Activated CD4-positive, alpha-beta T cell treated with anti-CD3 and anti-CD28 coated beads, Interleukin-2, amount 10 ng/mL, durations not matched to agents 24 days and 14 days (primary cell): ENCODE measurements at regions of chr3 and their contacts with region 1.

Region 1: GRCh38 chr3:124786441-124787241 is 56.4 kb downstream of the UMPS start:
- DNase-seq: no peak
- H3K4me3 Mint-ChIP-seq: no peak overlapping the region
- H3K27ac Mint-ChIP-seq: peak overlapping the region; percentile 34
- H3K4me1 Mint-ChIP-seq: peaks cover 13% of the 10 kb centered on the region
- H3K27me3 Mint-ChIP-seq: peaks cover 1% of the 10 kb centered on the region

Region 2: GRCh38 chr3:124876401-124876878 is 89.8 kb after region 1 on chr3:
- intact Hi-C with region 1: no loop called
- DNase-seq: no peak
- H3K4me3 Mint-ChIP-seq: no peak overlapping the region
- H3K27ac Mint-ChIP-seq: no peak overlapping the region
- H3K4me1 Mint-ChIP-seq: peaks cover 11% of the 10 kb centered on the region
- H3K27me3 Mint-ChIP-seq: peaks cover 25% of the 10 kb centered on the region

Region 3: DNA sequence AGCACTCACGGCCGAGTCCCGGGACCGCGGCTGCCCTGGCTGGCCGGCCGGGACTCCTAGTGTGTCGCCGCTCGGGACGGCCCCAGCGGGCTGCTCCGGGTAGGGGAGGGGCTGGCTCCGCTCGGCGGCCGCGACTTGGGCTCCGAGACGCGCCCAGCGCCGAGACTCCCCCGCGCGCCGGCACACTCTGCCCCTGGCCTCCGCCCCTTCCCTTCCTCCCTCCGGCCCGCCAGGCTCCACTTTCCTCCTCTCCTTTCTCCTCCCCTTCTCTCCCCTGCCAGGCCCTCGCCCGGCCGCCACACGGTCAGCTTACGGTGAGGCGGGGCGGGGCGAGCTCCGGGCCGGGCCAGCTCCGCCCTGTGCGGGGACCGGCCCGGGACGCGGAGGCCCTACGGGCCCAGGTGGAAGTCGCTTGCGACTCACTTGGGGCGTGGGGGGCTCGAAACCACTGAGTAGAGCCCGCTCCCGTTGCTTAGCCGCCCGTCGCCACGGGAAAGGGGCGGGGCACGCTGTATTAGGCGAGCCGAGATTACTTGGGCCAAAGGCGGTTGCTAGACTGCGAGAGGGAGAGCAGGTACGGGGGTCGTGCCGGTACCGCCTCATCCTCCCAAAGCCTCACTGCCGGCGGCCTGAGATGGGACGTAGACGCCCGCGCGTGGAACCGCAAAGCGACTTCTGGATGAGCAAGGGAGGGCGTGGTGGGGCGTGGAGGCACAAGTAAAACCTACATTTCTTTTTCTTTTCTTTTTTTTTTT is 100.7 kb after region 1 on chr3 and contains the start of gene ITGB5:
- intact Hi-C with region 1: loop called (anchors 5 kb)
- DNase-seq: peak; percentile 71
- H3K4me3 Mint-ChIP-seq: peak within 1 kb of the TSS; percentile 73
- H3K27ac Mint-ChIP-seq: no peak within 1 kb of the TSS
- H3K4me1 Mint-ChIP-seq: peaks cover 5% of the 10 kb centered on the region
- H3K27me3 Mint-ChIP-seq: peaks cover 58% of the 10 kb centered on the region
- total RNA-seq, gene ITGB5: 2.1 and 2.2 TPM in 2 replicates